ENCODE measurements at regions of chr4 and their contacts with region 1.

Region 1: GRCh38 chr4:25842229-25842845 is 20.5 kb downstream of the SEL1L3 start:
- DNase-seq: peak; percentile 52 to 81 (median 80)
- H3K4me3 ChIP-seq: peak overlapping the region in 1 of 7 experiments; percentile 36
- H3K27ac ChIP-seq: no peak overlapping the region
- H3K4me1 ChIP-seq: peaks cover 2 to 34% (median 19%) of the 10 kb centered on the region in 4 experiments
- H3K27me3 ChIP-seq: no peaks in the 10 kb centered on the region

Region 2: DNA sequence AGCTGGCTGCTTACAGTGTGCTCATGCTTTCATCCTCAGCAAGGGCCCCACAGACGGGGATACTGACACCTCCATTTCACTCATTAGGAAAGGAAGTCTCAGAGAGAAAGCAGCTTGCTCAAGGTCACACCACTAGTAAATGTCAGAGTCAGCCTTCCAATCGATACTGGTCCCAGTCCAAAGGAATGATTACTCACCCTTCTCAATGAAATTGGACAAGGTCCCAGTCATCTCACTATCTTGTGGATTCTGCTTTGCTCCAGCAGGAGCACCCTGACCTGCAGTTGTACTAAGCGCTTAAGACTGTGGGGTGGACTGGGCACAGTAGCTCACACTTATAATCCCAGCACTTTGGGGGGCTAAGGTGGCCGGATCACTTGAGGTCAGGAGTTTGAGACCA is 318.9 kb before region 1 on chr4:
- CTCF ChIA-PET with region 1: no interaction called
- POLR2A ChIA-PET with region 1: no interaction called
- DNase-seq: no peak
- H3K4me3 ChIP-seq: no peak overlapping the region
- H3K27ac ChIP-seq: no peak overlapping the region
- H3K4me1 ChIP-seq: no peaks in the 10 kb centered on the region
- H3K27me3 ChIP-seq: peaks cover 0 to 2% (median 0%) of the 10 kb centered on the region in 5 experiments

Region 3: DNA sequence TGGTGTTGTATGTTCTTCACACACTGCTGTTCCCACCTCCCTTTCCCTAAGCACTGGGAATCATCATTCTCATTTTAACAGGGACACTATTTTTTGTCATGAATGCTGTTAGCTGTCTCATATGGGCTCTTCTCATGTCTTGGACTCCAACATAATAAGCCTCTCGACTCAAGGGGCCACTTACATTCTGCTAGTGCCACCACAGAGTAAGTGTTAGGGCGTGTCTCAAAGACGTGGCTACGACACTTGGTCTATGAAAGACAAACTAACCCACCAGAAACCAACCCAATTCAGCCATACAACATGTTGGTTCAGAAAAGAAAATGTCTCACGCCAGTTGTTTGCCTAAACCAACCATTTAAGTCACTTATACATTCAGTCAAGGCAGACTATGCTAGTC is 11.8 kb before region 1 on chr4:
- CTCF ChIA-PET with region 1: no interaction called
- POLR2A ChIA-PET with region 1: no interaction called
- DNase-seq: no peak
- H3K4me3 ChIP-seq: no peak overlapping the region
- H3K27ac ChIP-seq: no peak overlapping the region
- H3K4me1 ChIP-seq: no peaks in the 10 kb centered on the region
- H3K27me3 ChIP-seq: no peaks in the 10 kb centered on the region

Region 4: DNA sequence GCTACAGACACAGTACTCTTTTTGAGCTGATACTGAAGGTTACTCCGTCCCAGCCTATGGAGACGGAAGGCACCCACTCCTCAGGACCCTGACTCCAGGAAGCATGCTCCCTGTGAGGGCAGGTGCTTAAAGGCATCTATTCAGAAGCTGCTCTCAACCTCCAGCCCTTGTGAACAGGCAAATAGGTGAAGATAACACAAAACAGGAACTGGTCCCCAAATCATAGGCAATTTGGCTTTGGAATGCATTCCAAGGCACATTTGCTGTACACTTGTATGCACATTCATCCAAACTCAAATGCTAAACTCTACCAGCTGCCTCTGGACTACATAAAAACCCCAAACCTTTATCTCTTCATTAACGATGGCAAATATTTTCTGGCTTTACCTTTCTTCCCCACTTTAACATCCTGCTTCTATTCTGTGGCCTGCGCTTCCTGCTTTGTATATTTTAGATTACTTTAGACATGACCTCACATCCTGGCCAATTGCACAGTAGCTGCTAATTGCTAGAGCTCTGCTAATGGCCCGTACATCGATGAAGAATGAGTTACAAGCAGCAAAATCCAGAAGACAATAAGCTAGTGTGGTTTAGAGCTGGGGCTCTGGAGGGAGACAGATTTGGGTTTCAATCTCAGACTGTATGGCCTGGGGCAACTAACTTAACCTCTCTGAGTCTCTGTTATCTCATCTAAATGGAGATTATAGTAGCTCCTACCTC is 17.3 kb after region 1 on chr4:
- CTCF ChIA-PET with region 1: interaction called, 17 read pairs
- POLR2A ChIA-PET with region 1: no interaction called
- DNase-seq: peak; percentile 66 to 87 (median 79)
- H3K4me3 ChIP-seq: peak overlapping the region in 2 of 7 experiments; percentile 9 to 25
- H3K27ac ChIP-seq: peak overlapping the region; percentile 5 to 51
- H3K4me1 ChIP-seq: peaks cover 38 to 74% (median 61%) of the 10 kb centered on the region in 4 experiments
- H3K27me3 ChIP-seq: no peaks in the 10 kb centered on the region